ENCODE measurements at regions of chr2 and their contacts with region 1.

Region 1: GRCh38 chr2:127197475-127198385 is 22.4 kb downstream of the CYP27C1 start:
- DNase-seq: peak; percentile 71
- ATAC-seq: peak; percentile 99
- H3K4me3 ChIP-seq: peak overlapping the region; percentile 37 to 62 (median 57)
- H3K27ac ChIP-seq: no peak overlapping the region
- H3K4me1 ChIP-seq: peaks cover 11% of the 10 kb centered on the region
- H3K27me3 ChIP-seq: peaks cover 2 to 33% of the 10 kb centered on the region in 2 experiments; a peak in 2 of 5 replicates
- CTCF ChIP-seq: peak; percentile 99
- EP300 ChIP-seq: no peak
- POLR2A ChIP-seq: no peak
- RAD21 ChIP-seq: peak; percentile 87

Region 2: GRCh38 chr2:126793885-126794613 is 403.7 kb before region 1 on chr2:
- CTCF ChIA-PET with region 1: no interaction called
- POLR2A ChIA-PET with region 1: no interaction called
- in situ Hi-C with region 1: no loop called
- intact Hi-C with region 1: no loop called
- DNase-seq: no peak
- ATAC-seq: peak; percentile 83
- H3K4me3 ChIP-seq: no peak overlapping the region
- H3K27ac ChIP-seq: no peak overlapping the region
- H3K4me1 ChIP-seq: no peaks in the 10 kb centered on the region
- H3K27me3 ChIP-seq: peaks cover 1 to 59% of the 10 kb centered on the region in 2 experiments; a peak in 4 of 5 replicates
- CTCF ChIP-seq: peak; percentile 63
- EP300 ChIP-seq: no peak
- POLR2A ChIP-seq: no peak
- RAD21 ChIP-seq: no peak

Region 3: GRCh38 chr2:127094509-127095366 is 103.0 kb before region 1 on chr2:
- CTCF ChIA-PET with region 1: no interaction called
- POLR2A ChIA-PET with region 1: no interaction called
- in situ Hi-C with region 1: no loop called
- intact Hi-C with region 1: no loop called
- DNase-seq: no peak
- ATAC-seq: 0 out of 3 replicates have a peak, but pooled peaks have one; percentile 12
- H3K4me3 ChIP-seq: no peak overlapping the region
- H3K27ac ChIP-seq: no peak overlapping the region
- H3K4me1 ChIP-seq: no peaks in the 10 kb centered on the region
- H3K27me3 ChIP-seq: peaks cover 3 to 14% of the 10 kb centered on the region in 2 experiments; a peak in 2 of 5 replicates
- CTCF ChIP-seq: no peak
- EP300 ChIP-seq: no peak
- POLR2A ChIP-seq: no peak
- RAD21 ChIP-seq: no peak

Region 4: GRCh38 chr2:127293748-127294562 is 96.2 kb after region 1 on chr2 and contains the start of gene ERCC3:
- CTCF ChIA-PET with region 1: interaction called, 7 read pairs
- POLR2A ChIA-PET with region 1: interaction called, 3 read pairs
- in situ Hi-C with region 1: no loop called
- intact Hi-C with region 1: loop called (anchors 5 kb)
- DNase-seq: peak; percentile 89
- ATAC-seq: peak; percentile 99
- H3K4me3 ChIP-seq: peak within 1 kb of the TSS; percentile 82 to 97 (median 88)
- H3K27ac ChIP-seq: peak within 1 kb of the TSS; percentile 69
- H3K4me1 ChIP-seq: peaks cover 22% of the 10 kb centered on the region
- H3K27me3 ChIP-seq: no peaks in the 10 kb centered on the region; a peak in 1 of 5 replicates
- CTCF ChIP-seq: no peak
- EP300 ChIP-seq: no peak
- POLR2A ChIP-seq: peak; percentile 92 to 97
- RAD21 ChIP-seq: peak; percentile 73
- total RNA-seq, gene ERCC3: 43.3 and 49.7 TPM in 2 replicates

Region 5: DNA sequence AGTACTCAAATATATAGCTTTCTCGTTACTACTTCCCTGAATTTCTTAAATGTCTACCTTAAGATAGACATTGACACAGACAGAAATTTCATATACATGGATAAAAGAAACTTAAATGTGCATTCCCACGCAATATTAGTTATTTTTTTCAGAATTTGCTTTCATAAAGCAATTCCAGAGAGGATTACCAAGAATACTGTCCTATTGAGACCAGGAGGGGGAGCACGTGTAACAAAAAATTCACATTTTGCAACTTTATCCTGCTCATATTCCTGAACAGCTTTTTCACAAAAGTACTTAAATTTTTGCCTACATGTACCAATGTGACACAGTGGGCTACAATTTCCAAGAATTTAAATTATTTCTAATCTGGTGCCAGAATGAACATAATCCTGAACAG is 126.9 kb after region 1 on chr2:
- CTCF ChIA-PET with region 1: no interaction called
- POLR2A ChIA-PET with region 1: no interaction called
- in situ Hi-C with region 1: no loop called
- intact Hi-C with region 1: loop called (anchors 5 kb)
- DNase-seq: peak; percentile 59
- ATAC-seq: peak; percentile 79
- H3K4me3 ChIP-seq: no peak overlapping the region
- H3K27ac ChIP-seq: no peak overlapping the region
- H3K4me1 ChIP-seq: peaks cover 5% of the 10 kb centered on the region
- H3K27me3 ChIP-seq: no peaks in the 10 kb centered on the region
- CTCF ChIP-seq: peak; percentile 67
- EP300 ChIP-seq: no peak
- POLR2A ChIP-seq: no peak
- RAD21 ChIP-seq: peak; percentile 50; the same call in 1 of the 2 replicates

Region 6: DNA sequence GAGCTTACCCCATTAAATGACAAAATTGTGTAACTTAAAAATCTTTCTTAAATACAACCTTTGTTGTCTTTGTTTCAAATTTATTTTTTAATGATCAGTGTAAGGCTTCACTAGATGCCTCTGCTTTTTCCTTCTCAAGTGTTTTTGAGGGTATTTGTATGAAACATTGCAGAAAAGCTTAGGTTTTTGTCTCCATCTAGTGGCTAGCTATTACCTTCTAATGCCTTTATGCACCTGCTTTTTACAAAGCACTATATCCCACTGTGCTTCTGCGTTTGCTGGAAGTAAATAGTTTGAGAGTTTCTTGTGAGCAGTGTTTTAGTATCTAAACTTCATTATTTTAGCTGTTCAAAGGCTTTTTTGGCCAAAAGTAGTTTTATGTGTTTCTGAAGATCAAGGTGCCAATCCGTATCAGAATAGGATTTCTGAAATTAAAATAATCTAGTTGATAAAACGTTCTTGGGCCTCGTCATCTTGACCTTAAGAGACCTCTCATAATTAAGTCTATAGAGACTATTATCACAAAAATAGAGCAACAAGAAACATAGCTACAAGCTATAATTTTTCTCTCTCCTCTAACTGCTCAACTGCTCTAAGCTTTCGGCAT is 281.6 kb after region 1 on chr2:
- CTCF ChIA-PET with region 1: interaction called, 16 read pairs
- POLR2A ChIA-PET with region 1: interaction called, 4 read pairs
- in situ Hi-C with region 1: loop called (anchors 5 kb)
- intact Hi-C with region 1: loop called (anchors 1 kb)
- DNase-seq: peak; percentile 73
- ATAC-seq: peak; percentile 86
- H3K4me3 ChIP-seq: no peak overlapping the region
- H3K27ac ChIP-seq: no peak overlapping the region
- H3K4me1 ChIP-seq: peaks cover 19% of the 10 kb centered on the region; the same call in 1 of the 2 replicates
- H3K27me3 ChIP-seq: no peaks in the 10 kb centered on the region
- CTCF ChIP-seq: peak; percentile 85
- EP300 ChIP-seq: no peak
- POLR2A ChIP-seq: no peak
- RAD21 ChIP-seq: peak; percentile 87

Region 7: GRCh38 chr2:127563458-127564428 is 366.0 kb after region 1 on chr2:
- CTCF ChIA-PET with region 1: no interaction called
- POLR2A ChIA-PET with region 1: no interaction called
- in situ Hi-C with region 1: no loop called
- intact Hi-C with region 1: loop called (anchors 5 kb)
- DNase-seq: no peak
- ATAC-seq: no peak
- H3K4me3 ChIP-seq: no peak overlapping the region
- H3K27ac ChIP-seq: no peak overlapping the region
- H3K4me1 ChIP-seq: peaks cover 27% of the 10 kb centered on the region
- H3K27me3 ChIP-seq: peaks cover 7 to 75% of the 10 kb centered on the region in 2 experiments; a peak in 4 of 5 replicates
- CTCF ChIP-seq: no peak
- EP300 ChIP-seq: no peak
- POLR2A ChIP-seq: no peak
- RAD21 ChIP-seq: no peak

Region 8: GRCh38 chr2:127649684-127650040 is 451.9 kb after region 1 on chr2:
- CTCF ChIA-PET with region 1: no interaction called
- POLR2A ChIA-PET with region 1: no interaction called
- in situ Hi-C with region 1: no loop called
- intact Hi-C with region 1: loop called (anchors 1 kb)
- DNase-seq: peak; percentile 86
- ATAC-seq: peak; percentile 70
- H3K4me3 ChIP-seq: 0 out of 6 replicates have a peak overlapping the region, but pooled peaks of 1 of the 3 experiments have one; percentile 10
- H3K27ac ChIP-seq: no peak overlapping the region
- H3K4me1 ChIP-seq: peaks cover 62% of the 10 kb centered on the region
- H3K27me3 ChIP-seq: peaks cover 10 to 72% of the 10 kb centered on the region in 2 experiments
- CTCF ChIP-seq: peak; percentile 91
- EP300 ChIP-seq: no peak
- POLR2A ChIP-seq: no peak
- RAD21 ChIP-seq: peak; percentile 80